ENCODE measurements at regions of chr16 and their contacts with region 1.

Region 1: GRCh38 chr16:89363621-89364393 is 126.6 kb downstream of the ANKRD11 start:
- DNase-seq: peak; percentile 42
- H3K4me3 Mint-ChIP-seq: peak overlapping the region; percentile 63
- H3K27ac Mint-ChIP-seq: peak overlapping the region; percentile 81
- H3K4me1 Mint-ChIP-seq: peaks cover 97% of the 10 kb centered on the region
- H3K27me3 Mint-ChIP-seq: no peaks in the 10 kb centered on the region

Region 2: GRCh38 chr16:89122322-89122851 is 241.4 kb before region 1 on chr16:
- intact Hi-C with region 1: no loop called
- DNase-seq: no peak
- H3K4me3 Mint-ChIP-seq: no peak overlapping the region
- H3K27ac Mint-ChIP-seq: no peak overlapping the region
- H3K4me1 Mint-ChIP-seq: no peaks in the 10 kb centered on the region
- H3K27me3 Mint-ChIP-seq: no peaks in the 10 kb centered on the region

Region 3: DNA sequence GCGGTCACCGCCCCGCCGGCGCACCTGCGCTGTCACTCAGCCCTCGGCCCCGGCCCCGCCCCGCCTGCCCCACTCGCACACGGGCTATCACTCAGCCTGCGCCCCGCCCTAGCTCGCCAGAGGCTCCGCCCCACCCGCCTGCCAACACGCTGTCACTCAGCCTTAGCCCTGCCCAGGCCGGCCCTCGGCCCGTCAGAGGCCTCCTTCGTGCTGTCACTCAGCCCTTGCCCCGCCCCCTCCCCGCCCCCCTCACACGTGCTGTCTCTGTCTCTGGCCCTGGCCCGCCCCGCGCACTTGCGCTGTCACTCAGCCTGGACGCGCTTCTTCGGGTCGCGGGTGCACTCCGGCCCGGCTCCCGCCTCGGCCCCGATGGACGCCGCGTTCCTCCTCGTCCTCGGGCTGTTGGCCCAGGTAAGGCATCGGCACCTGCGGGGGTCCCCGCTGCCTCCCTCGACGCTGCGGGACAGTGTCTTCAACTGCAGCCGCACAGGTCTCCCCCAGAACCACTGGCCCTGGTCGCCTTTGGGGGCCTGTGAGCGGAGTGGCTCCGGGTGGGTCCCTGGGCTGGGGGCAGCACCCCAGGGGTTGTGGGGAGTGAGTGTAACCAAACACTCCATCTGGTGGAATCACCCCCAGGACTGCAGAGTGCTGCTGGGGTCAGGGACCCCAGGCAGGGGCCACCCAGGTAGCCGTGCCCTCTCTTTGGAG is 192.2 kb before region 1 on chr16 and contains the start of gene CDH15:
- intact Hi-C with region 1: no loop called
- DNase-seq: peak; percentile 86
- H3K4me3 Mint-ChIP-seq: peak within 1 kb of the TSS; percentile 71
- H3K27ac Mint-ChIP-seq: peak within 1 kb of the TSS; percentile 55
- H3K4me1 Mint-ChIP-seq: peaks cover 6% of the 10 kb centered on the region
- H3K27me3 Mint-ChIP-seq: no peaks in the 10 kb centered on the region
- total RNA-seq, gene CDH15: not detected in 2 replicates

Region 4: GRCh38 chr16:89256651-89257254 is 107.1 kb before region 1 on chr16:
- intact Hi-C with region 1: loop called (anchors 5 kb)
- DNase-seq: peak; percentile 62
- H3K4me3 Mint-ChIP-seq: peak overlapping the region; percentile 30
- H3K27ac Mint-ChIP-seq: no peak overlapping the region
- H3K4me1 Mint-ChIP-seq: peaks cover 19% of the 10 kb centered on the region
- H3K27me3 Mint-ChIP-seq: peaks cover 24% of the 10 kb centered on the region

Region 5: DNA sequence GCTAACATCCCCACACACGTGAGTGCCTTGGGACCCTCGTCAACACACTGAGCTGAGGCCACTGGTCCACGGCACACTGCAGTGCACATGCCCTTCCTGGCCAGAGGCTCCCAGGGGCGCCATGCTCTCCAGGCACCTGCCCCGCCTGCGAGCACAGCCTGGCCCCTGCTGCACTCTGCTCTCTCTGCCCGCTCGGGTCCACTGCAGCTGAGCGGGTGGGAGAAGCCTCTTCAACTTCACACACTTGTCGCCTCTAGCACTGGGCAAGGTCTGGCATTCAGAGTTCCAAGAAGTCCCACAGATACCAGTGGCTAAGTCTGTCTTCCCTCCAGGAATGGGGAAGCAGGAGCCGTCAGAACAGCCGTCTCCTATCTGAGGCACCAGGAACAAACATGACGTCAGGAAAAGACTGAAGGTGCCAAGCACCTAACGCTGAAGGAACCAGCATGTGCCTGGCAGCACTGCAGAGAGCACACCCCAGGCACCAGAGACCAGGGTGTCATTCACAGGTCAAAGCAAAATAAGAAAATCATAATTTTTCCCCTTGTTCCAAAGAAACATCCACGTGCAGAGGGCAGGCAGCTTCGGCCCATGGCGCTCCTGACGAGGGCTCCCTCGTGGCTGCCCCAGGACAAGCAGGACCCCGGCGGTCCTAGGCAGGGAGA is 63.4 kb before region 1 on chr16:
- intact Hi-C with region 1: no loop called
- DNase-seq: no peak
- H3K4me3 Mint-ChIP-seq: no peak overlapping the region
- H3K27ac Mint-ChIP-seq: no peak overlapping the region
- H3K4me1 Mint-ChIP-seq: peaks cover 32% of the 10 kb centered on the region
- H3K27me3 Mint-ChIP-seq: no peaks in the 10 kb centered on the region

Region 6: DNA sequence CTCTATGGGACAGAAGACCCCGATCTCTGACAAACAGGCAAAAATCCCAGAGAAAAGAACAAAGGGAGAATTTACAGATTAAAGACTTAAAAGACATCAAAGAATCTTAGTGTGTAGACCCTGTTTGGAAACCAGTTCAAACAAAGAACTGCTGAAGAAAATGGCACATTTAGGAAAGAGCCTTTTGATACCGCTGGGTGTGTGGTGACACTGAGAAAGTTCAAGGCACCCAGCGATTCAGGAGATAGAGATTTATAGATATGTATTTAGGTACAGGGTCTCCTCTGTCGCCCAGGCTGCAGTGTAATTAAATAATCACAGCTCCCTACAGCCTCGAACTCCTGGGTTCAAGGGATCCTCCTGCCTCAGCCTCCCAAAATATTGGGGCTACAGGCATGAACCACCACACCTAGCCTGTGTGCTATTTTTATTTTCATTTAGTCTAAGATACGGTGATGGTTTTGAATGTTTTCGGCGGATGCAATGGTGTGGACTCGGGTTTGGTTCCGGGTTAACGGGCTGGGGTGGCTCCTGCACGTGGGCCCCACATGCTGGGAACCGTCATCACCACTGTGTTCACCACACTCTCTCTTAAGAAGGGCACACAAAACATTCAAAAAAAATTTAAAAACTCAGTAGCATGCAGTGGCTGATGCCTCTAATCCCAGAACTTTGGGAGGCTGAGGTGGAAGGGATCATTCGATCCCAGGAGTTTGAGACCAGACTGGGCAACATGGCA is 32.3 kb before region 1 on chr16:
- intact Hi-C with region 1: loop called (anchors 1 kb)
- DNase-seq: no peak
- H3K4me3 Mint-ChIP-seq: peak overlapping the region; percentile 31
- H3K27ac Mint-ChIP-seq: peak overlapping the region; percentile 2
- H3K4me1 Mint-ChIP-seq: peaks cover 71% of the 10 kb centered on the region
- H3K27me3 Mint-ChIP-seq: no peaks in the 10 kb centered on the region

Region 7: GRCh38 chr16:89350701-89351380 is 13.0 kb before region 1 on chr16:
- intact Hi-C with region 1: loop called (anchors 1 kb)
- DNase-seq: no peak
- H3K4me3 Mint-ChIP-seq: peak overlapping the region; percentile 25
- H3K27ac Mint-ChIP-seq: peak overlapping the region; percentile 85
- H3K4me1 Mint-ChIP-seq: peaks cover 68% of the 10 kb centered on the region
- H3K27me3 Mint-ChIP-seq: no peaks in the 10 kb centered on the region

Region 8: DNA sequence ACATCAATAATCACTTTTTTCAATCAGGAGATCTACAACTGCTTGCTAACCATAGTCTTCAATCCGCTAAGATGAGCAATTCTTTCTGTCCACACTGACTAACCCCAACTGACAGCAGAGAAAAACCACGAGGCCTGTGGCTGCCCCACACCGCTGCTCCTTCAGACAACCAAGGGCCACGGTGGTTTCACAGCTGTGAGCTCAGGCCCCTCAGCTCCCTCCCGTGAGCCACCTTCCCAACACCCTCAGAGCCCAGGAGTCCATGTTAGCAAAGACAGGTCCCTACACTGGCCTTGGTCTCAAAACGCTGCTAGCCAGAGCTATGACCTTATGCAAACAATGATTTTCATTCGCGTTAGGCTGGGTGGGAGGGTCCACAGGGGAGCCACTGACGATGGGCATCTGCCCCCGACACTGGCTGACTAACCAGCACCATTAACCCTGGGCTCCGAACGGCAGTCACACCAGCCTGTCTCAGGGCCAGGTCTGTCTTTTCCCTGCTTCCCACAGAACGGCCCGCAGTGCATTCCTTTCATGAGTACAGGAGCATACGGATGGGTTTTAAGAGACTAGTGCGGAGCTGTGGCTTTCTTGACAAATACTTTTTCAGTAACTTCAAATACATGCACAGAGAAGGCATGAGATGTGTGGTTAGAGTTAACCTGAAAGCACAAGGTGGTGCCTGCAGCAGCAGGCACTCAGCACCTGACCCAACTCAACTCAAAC is 59.3 kb after region 1 on chr16:
- intact Hi-C with region 1: loop called (anchors 5 kb)
- DNase-seq: peak; percentile 46
- H3K4me3 Mint-ChIP-seq: peak overlapping the region; percentile 53
- H3K27ac Mint-ChIP-seq: peak overlapping the region; percentile 92
- H3K4me1 Mint-ChIP-seq: peaks cover 64% of the 10 kb centered on the region
- H3K27me3 Mint-ChIP-seq: no peaks in the 10 kb centered on the region

Region 9: GRCh38 chr16:89560378-89561141 is 196.8 kb after region 1 on chr16 and contains the start of gene RPL13:
- intact Hi-C with region 1: loop called (anchors 1 kb)
- DNase-seq: peak; percentile 91
- H3K4me3 Mint-ChIP-seq: peak within 1 kb of the TSS; percentile 98
- H3K27ac Mint-ChIP-seq: peak within 1 kb of the TSS; percentile 99
- H3K4me1 Mint-ChIP-seq: peaks cover 48% of the 10 kb centered on the region
- H3K27me3 Mint-ChIP-seq: no peaks in the 10 kb centered on the region
- total RNA-seq, gene RPL13: 2,076 and 2,133 TPM in 2 replicates